ENCODE measurements at regions of chr4 and their contacts with region 1.

Region 1: DNA sequence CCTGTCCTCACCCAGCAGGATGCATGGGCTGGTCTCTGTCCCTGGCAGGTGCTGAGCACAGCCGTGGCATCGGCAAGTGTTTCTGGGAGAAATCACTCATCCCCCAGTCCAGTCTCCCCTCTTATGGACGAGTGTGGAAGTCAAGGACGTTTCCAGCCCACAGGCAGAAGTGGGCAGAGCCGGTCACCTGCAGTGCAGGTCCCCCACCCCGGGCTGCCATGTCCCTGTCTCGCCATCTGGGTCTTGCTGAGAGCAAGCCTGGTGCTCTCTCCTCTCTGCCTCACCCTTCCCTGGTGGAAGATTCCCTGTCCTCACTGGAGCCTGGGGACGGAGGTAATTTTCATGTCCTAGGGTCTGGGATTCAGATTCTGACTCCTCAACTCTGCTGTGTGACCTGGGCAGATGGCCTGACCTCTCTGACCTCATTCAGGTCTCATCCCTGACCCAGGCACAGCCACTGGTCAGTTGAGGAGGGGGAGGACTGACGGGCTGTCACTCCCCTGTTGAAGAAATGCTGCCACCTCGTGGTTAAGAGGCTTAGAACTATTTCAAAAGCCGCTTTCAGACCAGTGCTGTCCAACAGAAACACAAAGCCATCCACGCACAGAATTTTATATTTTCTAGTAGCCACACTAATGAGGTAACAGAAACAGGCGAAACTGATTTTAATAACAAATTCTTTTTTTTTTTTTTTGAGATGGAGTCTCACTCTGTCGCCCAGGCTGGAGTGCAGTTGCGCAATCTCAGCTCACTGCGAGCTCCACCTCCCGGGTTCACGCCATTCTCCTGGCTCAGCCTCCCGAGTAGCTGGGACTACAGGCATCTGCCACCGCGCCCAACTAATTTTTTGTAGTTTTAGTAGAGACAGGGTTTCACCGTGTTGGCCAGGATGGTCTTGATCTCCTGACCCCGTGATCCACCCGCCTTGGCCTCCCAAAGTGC is 1.8 kb downstream of the CPZ start:
- DNase-seq: peak; percentile 81
- ATAC-seq: peak; percentile 49
- H3K4me3 ChIP-seq: peak overlapping the region; percentile 76
- H3K27ac ChIP-seq: no peak overlapping the region
- H3K4me1 ChIP-seq: peaks cover 7% of the 10 kb centered on the region; the same call in 1 of the 2 replicates
- H3K27me3 ChIP-seq: no peaks in the 10 kb centered on the region
- CTCF ChIP-seq: peak; percentile 76

Region 2: DNA sequence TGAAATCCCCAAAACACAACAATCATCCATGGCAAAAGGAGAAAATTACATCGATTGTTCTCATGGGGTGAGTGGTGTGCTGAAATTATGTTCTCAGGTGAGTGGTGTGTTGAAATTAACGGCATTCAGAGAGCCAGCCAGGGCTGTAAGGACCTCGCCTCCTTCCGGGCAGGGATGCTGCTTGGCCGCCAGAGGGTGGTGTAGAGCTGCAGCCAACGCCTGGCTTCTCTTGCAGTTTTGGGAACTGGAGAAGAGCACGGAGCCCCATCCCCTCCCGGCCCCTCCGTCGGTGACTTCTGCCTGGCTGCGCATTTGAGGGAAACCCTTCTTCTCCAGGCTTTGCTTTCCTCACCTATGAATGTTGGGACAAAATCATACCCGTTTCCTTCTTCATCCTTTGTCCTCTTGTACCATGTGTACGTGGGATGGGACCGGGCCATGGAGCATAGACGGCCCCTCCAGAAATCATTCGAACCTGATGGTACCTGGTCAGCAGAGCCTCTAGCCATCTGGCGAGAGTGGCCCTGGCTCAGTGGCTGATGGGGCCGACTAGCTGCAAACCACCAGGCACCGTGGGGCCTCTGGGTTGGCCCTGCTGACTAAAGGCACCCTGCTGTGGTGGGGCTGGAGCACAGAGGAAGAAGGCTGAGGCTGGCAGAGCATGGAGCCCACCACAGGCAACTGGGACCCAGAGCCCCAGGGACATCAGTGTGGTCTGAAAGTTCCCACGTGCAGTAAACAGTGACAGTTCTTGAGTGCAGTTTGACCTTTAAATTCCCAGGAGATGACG is 125.4 kb before region 1 on chr4:
- CTCF ChIA-PET with region 1: interaction called, 5 read pairs
- POLR2A ChIA-PET with region 1: no interaction called
- intact Hi-C with region 1: loop called (anchors 1 kb)
- DNase-seq: peak; percentile 63
- ATAC-seq: peak; percentile 76
- H3K4me3 ChIP-seq: no peak overlapping the region
- H3K27ac ChIP-seq: no peak overlapping the region
- H3K4me1 ChIP-seq: no peaks in the 10 kb centered on the region; the same call in 1 of the 2 replicates
- H3K27me3 ChIP-seq: no peaks in the 10 kb centered on the region
- CTCF ChIP-seq: peak; percentile 90

Region 3: DNA sequence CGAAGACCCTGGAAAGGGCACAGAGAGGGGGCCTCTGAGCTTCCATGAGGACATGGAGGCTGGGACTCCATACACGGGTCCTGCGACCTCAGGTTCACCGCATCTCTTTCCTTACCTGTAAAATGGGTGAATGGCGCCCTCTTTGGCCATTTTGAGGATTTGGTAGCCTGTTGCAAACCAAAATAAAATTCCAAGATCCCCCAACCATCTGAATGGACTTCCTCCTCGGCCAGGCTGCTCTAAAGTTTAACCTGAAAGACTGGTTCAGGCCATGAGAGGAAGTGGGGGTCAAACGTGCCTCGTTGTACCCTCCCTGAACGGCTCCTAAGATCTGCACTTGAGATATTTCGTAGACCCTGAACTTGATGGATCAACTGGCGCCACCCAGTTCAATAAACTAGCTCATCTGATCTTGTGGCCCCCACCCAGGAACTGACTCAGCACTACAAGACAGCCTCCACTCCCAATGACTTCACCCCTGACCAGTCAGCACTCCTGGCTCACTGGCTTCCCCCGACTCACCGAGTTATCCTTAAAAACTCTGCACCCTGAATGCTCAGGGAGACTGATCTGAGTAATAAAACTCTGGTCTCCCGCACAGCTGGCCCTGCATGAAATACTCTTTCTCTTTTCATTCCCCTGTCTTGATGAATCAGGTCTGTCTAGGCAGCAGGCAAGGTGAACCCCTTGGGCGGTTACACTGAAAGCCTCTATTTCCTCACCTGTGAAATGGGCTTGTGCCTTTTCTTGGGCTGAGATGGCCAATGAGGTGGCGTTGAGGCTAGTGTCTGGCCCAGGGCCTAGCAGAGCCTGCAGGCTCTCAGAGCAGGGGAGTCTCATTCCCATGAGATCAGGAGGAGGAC is 47.0 kb before region 1 on chr4:
- CTCF ChIA-PET with region 1: no interaction called
- POLR2A ChIA-PET with region 1: no interaction called
- intact Hi-C with region 1: loop called (anchors 5 kb)
- DNase-seq: peak; percentile 85
- ATAC-seq: peak; percentile 86
- H3K4me3 ChIP-seq: 0 out of 2 replicates have a peak overlapping the region, but pooled peaks have one; percentile 24
- H3K27ac ChIP-seq: peak overlapping the region; percentile 98
- H3K4me1 ChIP-seq: peaks cover 33% of the 10 kb centered on the region
- H3K27me3 ChIP-seq: no peaks in the 10 kb centered on the region
- CTCF ChIP-seq: peak; percentile 73

Measured in PC-3 (cell line).